ENCODE measurements at regions of chr22 and their contacts with region 1.

Region 1: GRCh38 chr22:35862697-35863096 is 145.0 kb downstream of the APOL5 start:
- DNase-seq: no peak
- H3K4me3 Mint-ChIP-seq: no peak overlapping the region
- H3K27ac Mint-ChIP-seq: no peak overlapping the region
- H3K4me1 Mint-ChIP-seq: peaks cover 8% of the 10 kb centered on the region
- H3K27me3 Mint-ChIP-seq: no peaks in the 10 kb centered on the region
- CTCF ChIP-seq: no peak

Region 2: GRCh38 chr22:35882211-35883030 is 19.7 kb after region 1 on chr22:
- CTCF ChIA-PET with region 1: no interaction called
- intact Hi-C with region 1: loop called (anchors 1 kb)
- DNase-seq: no peak
- H3K4me3 Mint-ChIP-seq: no peak overlapping the region
- H3K27ac Mint-ChIP-seq: no peak overlapping the region
- H3K4me1 Mint-ChIP-seq: peaks cover 29% of the 10 kb centered on the region
- H3K27me3 Mint-ChIP-seq: no peaks in the 10 kb centered on the region
- CTCF ChIP-seq: no peak

Measured in Calu3 (cell line).